Naive thymus-derived CD4-positive, alpha-beta T cell (primary cell): ENCODE measurements at regions of chr2 and their contacts with region 1.

Region 1: DNA sequence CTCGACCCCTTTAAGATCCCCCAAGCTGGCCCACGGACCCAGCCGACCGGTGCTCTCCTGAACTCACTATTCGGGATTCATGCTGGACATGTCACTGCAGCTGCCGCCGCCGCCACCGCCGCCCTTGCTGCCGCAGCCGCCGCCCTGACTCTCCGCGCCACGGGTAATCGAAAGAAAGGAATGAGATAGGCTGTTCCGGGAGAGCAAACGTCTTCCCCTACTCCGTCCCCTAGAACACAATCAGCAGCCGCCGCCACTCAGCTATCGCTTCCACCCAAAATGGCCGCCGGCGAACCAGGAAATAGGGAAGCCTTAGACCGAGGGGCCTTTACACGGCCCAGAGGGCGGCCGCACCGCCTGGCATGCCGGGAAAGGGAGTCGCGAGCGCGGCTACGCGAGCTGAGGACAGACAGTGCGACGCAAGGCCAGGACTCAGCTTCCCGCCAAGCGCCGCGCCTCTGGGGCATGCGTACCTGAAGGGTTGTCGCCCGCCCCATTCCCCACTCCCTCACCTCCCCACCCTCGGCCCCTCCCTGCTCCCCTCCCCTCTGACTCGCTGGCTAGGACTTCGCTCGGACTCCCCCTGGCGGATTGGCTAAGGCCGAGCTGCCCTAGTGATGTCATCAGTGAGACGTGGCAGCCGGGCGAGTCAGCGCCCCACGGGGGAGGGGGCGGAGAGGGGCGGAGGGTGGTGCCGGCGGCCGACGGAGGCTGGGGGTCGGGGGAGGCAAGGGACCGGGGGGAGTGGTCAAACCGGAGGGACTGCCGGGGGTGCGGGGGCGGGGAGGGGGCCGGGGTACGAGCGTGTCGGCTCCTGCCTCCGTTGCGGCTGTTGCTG is at the start of gene RAB1A:
- DNase-seq: peak; percentile 91 to 99 (median 98)
- ATAC-seq: peak; percentile 94
- H3K4me3 ChIP-seq: peak within 1 kb of the TSS; percentile 78
- H3K4me3 Mint-ChIP-seq: peak within 1 kb of the TSS; percentile 90 to 100 (median 98)
- H3K27ac ChIP-seq: peak within 1 kb of the TSS; percentile 98
- H3K27ac Mint-ChIP-seq: peak within 1 kb of the TSS; percentile 95 to 100 (median 99)
- H3K4me1 ChIP-seq: peaks cover 24 to 25% of the 10 kb centered on the region in 2 donors
- H3K4me1 Mint-ChIP-seq: peaks cover 24 to 47% (median 35%) of the 10 kb centered on the region in 7 donors
- H3K27me3 ChIP-seq: no peaks in the 10 kb centered on the region
- H3K27me3 Mint-ChIP-seq: peaks cover 0 to 17% (median 0%) of the 10 kb centered on the region in 5 donors
- total RNA-seq, gene RAB1A: 48.8 to 78.6 (median 65.8) TPM

Region 2: GRCh38 chr2:63581298-63581961 is 1548.6 kb before region 1 on chr2:
- CTCF ChIA-PET with region 1: no interaction called
- POLR2A ChIA-PET with region 1: no interaction called
- intact Hi-C with region 1: no loop called
- DNase-seq: no peak
- ATAC-seq: no peak
- H3K4me3 ChIP-seq: no peak overlapping the region
- H3K4me3 Mint-ChIP-seq: no peak overlapping the region
- H3K27ac ChIP-seq: no peak overlapping the region
- H3K27ac Mint-ChIP-seq: no peak overlapping the region
- H3K4me1 ChIP-seq: no peaks in the 10 kb centered on the region
- H3K4me1 Mint-ChIP-seq: peaks cover under 1 to 31% (median 16%) of the 10 kb centered on the region in 7 donors
- H3K27me3 ChIP-seq: no peaks in the 10 kb centered on the region
- H3K27me3 Mint-ChIP-seq: no peaks in the 10 kb centered on the region

Region 3: GRCh38 chr2:64273524-64274398 is 856.3 kb before region 1 on chr2:
- CTCF ChIA-PET with region 1: no interaction called
- POLR2A ChIA-PET with region 1: no interaction called
- intact Hi-C with region 1: no loop called
- DNase-seq: no peak
- ATAC-seq: peak; percentile 67
- H3K4me3 ChIP-seq: no peak overlapping the region
- H3K4me3 Mint-ChIP-seq: peak overlapping the region in 3 of 10 donors; percentile 18 to 64 (median 19)
- H3K27ac ChIP-seq: no peak overlapping the region
- H3K27ac Mint-ChIP-seq: peak overlapping the region in 5 of 9 donors; percentile 9 to 88 (median 37)
- H3K4me1 ChIP-seq: peaks cover 0 to 10% of the 10 kb centered on the region in 2 donors
- H3K4me1 Mint-ChIP-seq: peaks cover 13 to 36% (median 21%) of the 10 kb centered on the region in 7 donors
- H3K27me3 ChIP-seq: no peaks in the 10 kb centered on the region
- H3K27me3 Mint-ChIP-seq: peaks cover 0 to 3% (median 0%) of the 10 kb centered on the region in 5 donors

Region 4: GRCh38 chr2:64779117-64779690 is 350.8 kb before region 1 on chr2:
- CTCF ChIA-PET with region 1: no interaction called
- POLR2A ChIA-PET with region 1: no interaction called
- intact Hi-C with region 1: no loop called
- DNase-seq: no peak
- ATAC-seq: no peak
- H3K4me3 ChIP-seq: no peak overlapping the region
- H3K4me3 Mint-ChIP-seq: no peak overlapping the region
- H3K27ac ChIP-seq: no peak overlapping the region
- H3K27ac Mint-ChIP-seq: no peak overlapping the region
- H3K4me1 ChIP-seq: no peaks in the 10 kb centered on the region
- H3K4me1 Mint-ChIP-seq: peaks cover 0 to 6% (median 0%) of the 10 kb centered on the region in 7 donors
- H3K27me3 ChIP-seq: no peaks in the 10 kb centered on the region
- H3K27me3 Mint-ChIP-seq: peaks cover 0 to 5% (median 0%) of the 10 kb centered on the region in 5 donors

Region 5: GRCh38 chr2:65096948-65097347 is 33.1 kb before region 1 on chr2:
- CTCF ChIA-PET with region 1: no interaction called
- POLR2A ChIA-PET with region 1: interaction called, 3 read pairs
- intact Hi-C with region 1: loop called in 1 of 2 experiments (anchors 5 kb)
- DNase-seq: no peak
- ATAC-seq: no peak
- H3K4me3 ChIP-seq: no peak overlapping the region
- H3K4me3 Mint-ChIP-seq: no peak overlapping the region
- H3K27ac ChIP-seq: no peak overlapping the region
- H3K27ac Mint-ChIP-seq: peak overlapping the region in 4 of 9 donors; percentile 11 to 62 (median 52)
- H3K4me1 ChIP-seq: no peaks in the 10 kb centered on the region
- H3K4me1 Mint-ChIP-seq: peaks cover 13 to 46% (median 38%) of the 10 kb centered on the region in 7 donors
- H3K27me3 ChIP-seq: no peaks in the 10 kb centered on the region
- H3K27me3 Mint-ChIP-seq: no peaks in the 10 kb centered on the region

Region 6: DNA sequence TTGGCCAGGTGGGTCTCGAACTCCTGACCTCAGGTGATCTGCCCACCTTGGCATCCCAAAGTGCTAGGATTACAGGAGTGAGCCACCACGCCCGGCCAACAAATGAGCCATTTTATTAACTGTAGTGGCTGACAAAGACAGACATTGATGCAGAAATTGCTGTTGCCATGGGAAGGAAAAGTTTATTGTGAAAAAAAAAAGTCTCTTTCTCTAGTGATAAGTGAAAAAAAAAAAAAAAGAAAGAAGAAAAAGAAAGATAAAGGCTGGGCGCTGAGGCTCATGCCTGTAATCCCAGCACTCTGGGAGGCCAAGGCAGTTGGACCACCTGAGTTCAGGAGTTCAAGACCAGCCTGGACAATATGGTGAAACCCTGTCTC is 39.7 kb after region 1 on chr2:
- CTCF ChIA-PET with region 1: no interaction called
- POLR2A ChIA-PET with region 1: no interaction called
- intact Hi-C with region 1: loop called in 1 of 2 experiments (anchors 1 kb)
- DNase-seq: no peak
- ATAC-seq: no peak
- H3K4me3 ChIP-seq: no peak overlapping the region
- H3K4me3 Mint-ChIP-seq: no peak overlapping the region
- H3K27ac ChIP-seq: no peak overlapping the region
- H3K27ac Mint-ChIP-seq: no peak overlapping the region
- H3K4me1 ChIP-seq: no peaks in the 10 kb centered on the region
- H3K4me1 Mint-ChIP-seq: peaks cover 0 to 2% (median under 1%) of the 10 kb centered on the region in 7 donors
- H3K27me3 ChIP-seq: no peaks in the 10 kb centered on the region
- H3K27me3 Mint-ChIP-seq: no peaks in the 10 kb centered on the region

Region 7: GRCh38 chr2:65227425-65228262 is 97.6 kb after region 1 on chr2 and contains the start of gene ACTR2:
- CTCF ChIA-PET with region 1: interaction called, 5 read pairs
- POLR2A ChIA-PET with region 1: interaction called, 22 read pairs
- intact Hi-C with region 1: loop called (anchors 1 kb)
- DNase-seq: peak; percentile 86 to 94 (median 93)
- ATAC-seq: peak; percentile 97
- H3K4me3 ChIP-seq: peak within 1 kb of the TSS; percentile 99
- H3K4me3 Mint-ChIP-seq: peak within 1 kb of the TSS; percentile 95 to 100 (median 98)
- H3K27ac ChIP-seq: peak within 1 kb of the TSS; percentile 97
- H3K27ac Mint-ChIP-seq: peak within 1 kb of the TSS; percentile 97 to 99 (median 98)
- H3K4me1 ChIP-seq: peaks cover 25 to 38% of the 10 kb centered on the region in 2 donors
- H3K4me1 Mint-ChIP-seq: peaks cover 24 to 54% (median 44%) of the 10 kb centered on the region in 7 donors
- H3K27me3 ChIP-seq: no peaks in the 10 kb centered on the region
- H3K27me3 Mint-ChIP-seq: no peaks in the 10 kb centered on the region
- total RNA-seq, gene ACTR2: 180 to 435 (median 287) TPM